Thyroid gland (tissue), 4 donors: ENCODE measurements at regions of chr17 and their contacts with region 1.

Region 1: DNA sequence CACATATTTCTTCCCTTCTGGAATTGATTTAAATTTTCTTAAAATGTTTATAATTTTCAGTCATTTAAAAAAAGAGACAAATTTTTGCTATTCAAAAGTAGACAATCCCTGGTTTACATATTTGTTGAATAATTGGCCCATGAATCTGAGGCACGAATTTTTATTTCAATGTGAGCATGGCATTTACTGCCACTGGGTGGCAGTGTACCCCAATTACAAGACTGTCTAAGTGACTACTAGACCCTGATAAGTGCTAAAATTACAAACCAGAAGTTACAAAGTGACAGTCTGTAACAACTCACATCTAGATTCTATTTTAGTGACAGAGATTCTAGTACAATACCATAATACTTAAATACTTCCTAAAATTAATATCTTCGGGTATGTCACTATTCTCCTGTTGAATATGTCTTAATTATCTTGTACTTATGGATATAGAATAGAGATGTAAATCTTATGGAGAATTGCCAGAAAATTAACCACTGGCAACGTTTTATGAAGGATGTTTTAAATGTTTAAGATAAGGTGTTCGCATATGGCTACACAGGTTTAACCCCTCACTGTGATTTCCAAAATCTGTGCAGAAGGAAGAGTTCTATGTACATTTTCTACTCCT is 235.8 kb downstream of the MAP2K4 start:
- DNase-seq: peak; percentile 45 to 59
- H3K4me3 ChIP-seq: no peak overlapping the region
- H3K27ac ChIP-seq: no peak overlapping the region
- H3K4me1 ChIP-seq: no peaks in the 10 kb centered on the region
- H3K27me3 ChIP-seq: no peaks in the 10 kb centered on the region
- CTCF ChIP-seq: peak; percentile 34 to 90 (median 70)
- POLR2A ChIP-seq: no peak

Region 2: DNA sequence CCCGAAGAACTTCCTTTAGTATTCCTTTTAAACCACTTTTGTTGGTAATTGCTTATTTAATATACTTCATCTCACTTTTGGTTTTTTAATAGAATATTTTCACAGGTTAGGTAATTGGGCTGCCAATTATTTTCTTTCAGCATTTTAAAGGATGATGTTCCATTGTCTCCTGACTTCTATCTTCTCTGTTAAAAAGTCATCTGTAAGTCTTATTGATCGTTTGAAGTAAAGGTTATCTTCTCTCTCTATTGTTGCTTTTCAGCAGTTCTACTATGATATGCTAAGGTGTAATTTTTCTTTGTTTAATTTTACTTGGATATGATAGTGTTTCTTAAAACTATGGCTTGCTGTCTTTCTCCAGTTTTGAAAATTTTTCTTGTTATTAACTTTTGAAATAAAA is 71.7 kb after region 1 on chr17:
- intact Hi-C with region 1: no loop called
- DNase-seq: no peak
- H3K4me3 ChIP-seq: no peak overlapping the region
- H3K27ac ChIP-seq: no peak overlapping the region
- H3K4me1 ChIP-seq: no peaks in the 10 kb centered on the region
- H3K27me3 ChIP-seq: no peaks in the 10 kb centered on the region
- CTCF ChIP-seq: no peak
- POLR2A ChIP-seq: no peak

Region 3: GRCh38 chr17:12667299-12667958 is 410.9 kb after region 1 on chr17:
- intact Hi-C with region 1: loop called (anchors 5 kb)
- DNase-seq: peak; percentile 8 to 17
- H3K4me3 ChIP-seq: no peak overlapping the region
- H3K27ac ChIP-seq: no peak overlapping the region
- H3K4me1 ChIP-seq: peaks cover 3 to 10% of the 10 kb centered on the region in 2 donors
- H3K27me3 ChIP-seq: peaks cover 3% of the 10 kb centered on the region
- CTCF ChIP-seq: peak in 4 of 6 experiments; percentile 33 to 68 (median 53)
- POLR2A ChIP-seq: no peak

Region 4: GRCh38 chr17:12691182-12691581 is 434.7 kb after region 1 on chr17:
- intact Hi-C with region 1: no loop called
- DNase-seq: no peak
- H3K4me3 ChIP-seq: no peak overlapping the region
- H3K27ac ChIP-seq: no peak overlapping the region
- H3K4me1 ChIP-seq: no peaks in the 10 kb centered on the region
- H3K27me3 ChIP-seq: no peaks in the 10 kb centered on the region
- CTCF ChIP-seq: no peak
- POLR2A ChIP-seq: no peak

Region 5: GRCh38 chr17:12744298-12744697 is 487.8 kb after region 1 on chr17:
- intact Hi-C with region 1: loop called (anchors 10 kb)
- DNase-seq: no peak
- H3K4me3 ChIP-seq: no peak overlapping the region
- H3K27ac ChIP-seq: no peak overlapping the region
- H3K4me1 ChIP-seq: peaks cover 0 to 4% of the 10 kb centered on the region in 2 donors
- H3K27me3 ChIP-seq: no peaks in the 10 kb centered on the region
- CTCF ChIP-seq: no peak
- POLR2A ChIP-seq: no peak